CD8-positive, alpha-beta T cell (primary cell): ENCODE measurements at regions of chr6 and their contacts with region 1.

Region 1: DNA sequence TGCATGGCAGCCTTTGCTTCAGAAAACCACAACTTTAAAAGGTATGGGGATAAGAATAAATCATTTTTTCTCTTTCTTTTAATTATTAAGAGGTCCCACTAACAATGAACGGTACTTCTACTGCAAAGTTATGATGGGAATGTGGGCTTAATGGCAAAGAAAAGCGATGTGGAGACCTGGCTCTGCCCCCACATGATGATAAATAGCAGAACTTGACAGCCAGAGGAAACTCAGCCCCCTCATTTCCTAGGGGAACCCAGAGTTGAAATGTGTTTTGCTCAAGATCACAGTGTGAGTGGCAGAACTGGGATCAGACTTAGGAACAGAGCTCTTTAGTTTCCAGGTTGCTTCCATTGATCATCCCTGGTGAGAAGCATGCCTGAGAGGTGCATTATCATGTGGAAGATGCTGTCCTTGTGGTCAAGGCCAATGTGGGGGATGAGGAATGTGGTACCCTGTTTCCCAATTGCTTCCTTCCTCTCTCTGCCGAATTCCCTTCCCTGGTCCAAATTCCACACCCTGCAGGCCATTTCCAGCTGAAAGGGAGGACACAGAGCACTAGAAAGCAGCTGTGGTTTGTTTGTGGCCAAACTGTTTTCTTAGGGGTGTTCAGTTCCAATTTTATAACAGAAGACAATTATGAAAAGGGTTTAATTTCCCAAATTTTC is 66.0 kb downstream of the BACH2 start:
- DNase-seq: no peak
- ATAC-seq: no peak
- H3K4me3 ChIP-seq: no peak overlapping the region
- H3K4me3 Mint-ChIP-seq: peak overlapping the region; percentile 45
- H3K27ac ChIP-seq: peak overlapping the region in 1 of 2 experiments; percentile 32
- H3K27ac Mint-ChIP-seq: peak overlapping the region; percentile 95
- H3K4me1 ChIP-seq: peaks cover 95% of the 10 kb centered on the region
- H3K4me1 Mint-ChIP-seq: peaks cover 92% of the 10 kb centered on the region
- H3K27me3 ChIP-seq: no peaks in the 10 kb centered on the region
- H3K27me3 Mint-ChIP-seq: no peaks in the 10 kb centered on the region
- CTCF ChIP-seq: no peak

Region 2: DNA sequence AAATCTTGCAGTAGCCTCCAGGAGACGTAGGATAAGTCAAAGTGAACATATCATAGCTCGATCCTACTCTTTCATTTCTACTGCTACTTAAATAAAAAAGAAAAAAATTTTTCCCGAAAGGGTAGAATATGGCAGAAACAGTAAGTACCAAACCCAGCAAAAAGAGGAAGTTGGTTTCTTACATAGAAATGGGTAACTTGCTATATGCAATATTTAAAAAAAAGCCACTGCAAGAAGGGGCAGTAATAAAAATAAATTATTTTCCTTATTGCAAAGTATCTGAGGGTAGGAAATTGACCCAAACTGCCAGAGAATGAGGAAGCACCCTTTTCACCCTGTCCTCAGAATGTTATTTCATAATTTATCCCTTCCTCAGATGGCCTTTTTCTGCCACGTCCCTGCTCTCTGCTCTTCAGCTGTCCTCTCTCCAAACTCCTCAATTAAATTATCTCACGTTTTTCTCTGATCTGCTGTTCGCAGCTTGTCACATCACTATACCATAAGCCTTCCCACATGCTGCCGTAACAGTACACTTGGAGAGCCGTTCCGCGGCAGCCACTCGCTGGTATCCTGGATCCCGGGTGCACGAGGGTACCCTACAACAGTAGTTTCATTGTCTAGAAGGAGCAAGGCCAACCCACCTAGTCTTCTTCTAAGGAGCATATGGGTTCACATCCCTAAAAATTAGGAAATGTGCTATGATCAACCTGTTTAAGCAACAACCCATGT is 83.6 kb before region 1 on chr6:
- CTCF ChIA-PET with region 1: no interaction called
- POLR2A ChIA-PET with region 1: no interaction called
- intact Hi-C with region 1: no loop called
- DNase-seq: no peak
- ATAC-seq: no peak
- H3K4me3 ChIP-seq: no peak overlapping the region
- H3K4me3 Mint-ChIP-seq: peak overlapping the region; percentile 35
- H3K27ac ChIP-seq: no peak overlapping the region
- H3K27ac Mint-ChIP-seq: peak overlapping the region; percentile 80
- H3K4me1 ChIP-seq: peaks cover 49% of the 10 kb centered on the region
- H3K4me1 Mint-ChIP-seq: peaks cover 69% of the 10 kb centered on the region
- H3K27me3 ChIP-seq: no peaks in the 10 kb centered on the region
- H3K27me3 Mint-ChIP-seq: no peaks in the 10 kb centered on the region
- CTCF ChIP-seq: no peak

Region 3: DNA sequence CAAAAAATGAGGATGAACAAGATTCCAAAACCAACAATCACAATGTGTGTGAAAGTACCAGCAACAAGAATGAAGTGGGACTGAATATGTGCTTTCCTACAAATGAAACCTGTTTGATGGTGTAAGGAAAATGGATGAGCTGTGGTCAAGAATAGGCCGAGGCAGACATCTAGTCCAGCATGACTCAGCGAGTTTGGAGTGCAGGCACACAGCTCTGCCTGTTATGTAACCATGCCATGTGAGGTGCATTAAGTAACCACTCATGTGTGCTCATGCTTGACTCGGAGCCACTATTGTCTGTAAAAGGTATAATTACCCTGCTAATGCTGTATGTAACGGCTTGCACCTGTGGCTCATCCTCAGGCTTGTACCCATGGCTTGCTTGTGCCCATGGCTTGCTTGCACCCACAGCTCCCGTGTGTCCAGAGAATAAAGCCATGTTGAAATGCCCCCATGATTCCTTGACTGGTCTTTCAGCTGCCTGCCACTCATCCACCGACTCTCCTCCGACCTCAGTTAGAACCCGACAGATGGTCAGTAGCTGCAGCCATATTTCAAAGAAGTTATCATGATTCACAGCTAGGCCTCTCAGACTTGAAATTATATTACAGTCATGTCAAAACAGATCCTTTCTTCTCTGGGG is 32.7 kb before region 1 on chr6:
- CTCF ChIA-PET with region 1: no interaction called
- POLR2A ChIA-PET with region 1: interaction called, 3 read pairs
- intact Hi-C with region 1: loop called in 1 of 2 experiments (anchors 5 kb)
- DNase-seq: no peak
- ATAC-seq: no peak
- H3K4me3 ChIP-seq: no peak overlapping the region
- H3K4me3 Mint-ChIP-seq: no peak overlapping the region
- H3K27ac ChIP-seq: no peak overlapping the region
- H3K27ac Mint-ChIP-seq: peak overlapping the region; percentile 87
- H3K4me1 ChIP-seq: peaks cover 74% of the 10 kb centered on the region
- H3K4me1 Mint-ChIP-seq: peaks cover 76% of the 10 kb centered on the region
- H3K27me3 ChIP-seq: no peaks in the 10 kb centered on the region
- H3K27me3 Mint-ChIP-seq: no peaks in the 10 kb centered on the region
- CTCF ChIP-seq: no peak

Region 4: DNA sequence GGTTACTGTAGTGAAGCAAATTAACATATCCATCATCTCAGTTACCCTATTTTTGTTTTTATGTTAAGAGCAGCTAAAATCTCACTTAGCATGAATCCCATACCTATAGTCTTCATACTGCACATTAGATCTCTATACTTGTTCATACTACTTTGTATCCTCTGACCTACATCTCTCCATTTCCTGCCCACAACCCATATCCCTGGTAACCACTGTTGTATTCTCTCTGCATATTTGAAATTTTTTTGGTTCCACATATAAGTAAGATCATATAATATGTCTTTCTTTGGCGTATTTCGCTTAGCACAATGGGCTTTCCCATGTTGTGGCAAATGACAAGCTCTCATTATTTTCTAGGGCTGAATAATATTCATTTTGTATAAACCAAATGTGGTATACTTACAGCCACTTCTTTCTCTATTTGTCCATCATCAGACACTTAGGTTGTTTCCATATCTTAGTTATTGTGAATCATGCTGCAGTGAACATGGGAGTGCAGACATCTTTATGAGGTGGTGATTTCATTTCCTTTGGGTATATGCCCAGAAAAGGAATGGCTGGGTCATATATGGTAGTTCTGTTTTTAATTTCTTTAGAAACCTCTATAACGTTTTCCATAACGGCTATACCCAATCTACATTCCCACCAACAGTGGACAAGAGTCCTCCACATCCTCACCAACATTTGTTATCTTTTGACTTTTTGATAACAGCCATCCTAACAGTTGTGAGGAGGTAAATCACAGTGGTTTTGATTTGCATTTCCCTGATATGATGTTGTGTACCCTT is 26.2 kb after region 1 on chr6:
- CTCF ChIA-PET with region 1: interaction called, 3 read pairs
- POLR2A ChIA-PET with region 1: no interaction called
- intact Hi-C with region 1: loop called in 1 of 2 experiments (anchors 2 kb)
- DNase-seq: peak in 3 of 9 experiments; percentile 30 to 63 (median 45)
- ATAC-seq: peak; percentile 77
- H3K4me3 ChIP-seq: no peak overlapping the region
- H3K4me3 Mint-ChIP-seq: peak overlapping the region; percentile 1
- H3K27ac ChIP-seq: peak overlapping the region in 1 of 2 experiments; percentile 29
- H3K27ac Mint-ChIP-seq: peak overlapping the region; percentile 82
- H3K4me1 ChIP-seq: peaks cover 63% of the 10 kb centered on the region
- H3K4me1 Mint-ChIP-seq: peaks cover 84% of the 10 kb centered on the region
- H3K27me3 ChIP-seq: no peaks in the 10 kb centered on the region
- H3K27me3 Mint-ChIP-seq: no peaks in the 10 kb centered on the region
- CTCF ChIP-seq: no peak

Region 5: GRCh38 chr6:90285611-90286381 is 55.1 kb after region 1 on chr6:
- CTCF ChIA-PET with region 1: no interaction called
- POLR2A ChIA-PET with region 1: no interaction called
- intact Hi-C with region 1: loop called in 1 of 2 experiments (anchors 1 kb)
- DNase-seq: peak in 5 of 9 experiments; percentile 46 to 77 (median 64)
- ATAC-seq: peak; percentile 46
- H3K4me3 ChIP-seq: peak overlapping the region; percentile 30 to 62
- H3K4me3 Mint-ChIP-seq: peak overlapping the region; percentile 83
- H3K27ac ChIP-seq: peak overlapping the region; percentile 1 to 74
- H3K27ac Mint-ChIP-seq: peak overlapping the region; percentile 93
- H3K4me1 ChIP-seq: peaks cover 93% of the 10 kb centered on the region
- H3K4me1 Mint-ChIP-seq: peaks cover 90% of the 10 kb centered on the region
- H3K27me3 ChIP-seq: no peaks in the 10 kb centered on the region
- H3K27me3 Mint-ChIP-seq: no peaks in the 10 kb centered on the region
- CTCF ChIP-seq: no peak